ENCODE measurements at regions of chrX and their contacts with region 1.

Region 1: GRCh38 chrX:110853610-110854009 is 58.0 kb upstream of the CHRDL1 start:
- DNase-seq: peak; percentile 42
- H3K4me3 ChIP-seq: no peak overlapping the region
- H3K27ac ChIP-seq: no peak overlapping the region
- H3K4me1 ChIP-seq: no peaks in the 10 kb centered on the region
- H3K27me3 ChIP-seq: no peaks in the 10 kb centered on the region
- CTCF ChIP-seq: peak; percentile 42 to 66

Region 2: GRCh38 chrX:110167952-110168451 is 685.6 kb before region 1 on chrX:
- CTCF ChIA-PET with region 1: no interaction called
- dilution Hi-C with region 1: no loop called
- in situ Hi-C with region 1: loop called in 1 of 2 experiments (anchors 25 kb)
- intact Hi-C with region 1: no loop called
- DNase-seq: peak; percentile 27
- H3K4me3 ChIP-seq: no peak overlapping the region
- H3K27ac ChIP-seq: no peak overlapping the region
- H3K4me1 ChIP-seq: peaks cover 12% of the 10 kb centered on the region
- H3K27me3 ChIP-seq: no peaks in the 10 kb centered on the region
- CTCF ChIP-seq: peak; percentile 40 to 60

Region 3: DNA sequence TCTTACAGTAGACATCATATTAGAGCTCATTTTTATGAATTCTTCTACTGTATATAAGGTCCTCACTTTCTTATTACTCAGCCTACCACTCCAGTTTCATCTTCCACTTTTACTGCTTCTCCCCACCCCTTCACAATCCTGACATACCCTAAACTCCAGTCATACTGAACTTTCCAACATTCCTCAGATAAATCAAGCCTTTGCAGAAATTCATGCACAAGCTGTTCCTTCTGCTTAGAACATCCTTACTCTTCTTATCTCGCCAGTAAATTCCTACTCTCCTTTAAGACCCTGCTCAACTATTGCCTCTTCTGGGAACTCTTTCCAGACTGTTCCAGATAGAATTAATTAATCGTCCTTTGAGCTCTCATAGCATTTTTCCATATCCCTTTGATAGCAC is 470.2 kb before region 1 on chrX:
- CTCF ChIA-PET with region 1: no interaction called
- dilution Hi-C with region 1: no loop called
- in situ Hi-C with region 1: no loop called
- intact Hi-C with region 1: no loop called
- DNase-seq: peak; percentile 41
- H3K4me3 ChIP-seq: no peak overlapping the region
- H3K27ac ChIP-seq: peak overlapping the region; percentile 34
- H3K4me1 ChIP-seq: peaks cover 15% of the 10 kb centered on the region
- H3K27me3 ChIP-seq: no peaks in the 10 kb centered on the region
- CTCF ChIP-seq: no peak

Region 4: DNA sequence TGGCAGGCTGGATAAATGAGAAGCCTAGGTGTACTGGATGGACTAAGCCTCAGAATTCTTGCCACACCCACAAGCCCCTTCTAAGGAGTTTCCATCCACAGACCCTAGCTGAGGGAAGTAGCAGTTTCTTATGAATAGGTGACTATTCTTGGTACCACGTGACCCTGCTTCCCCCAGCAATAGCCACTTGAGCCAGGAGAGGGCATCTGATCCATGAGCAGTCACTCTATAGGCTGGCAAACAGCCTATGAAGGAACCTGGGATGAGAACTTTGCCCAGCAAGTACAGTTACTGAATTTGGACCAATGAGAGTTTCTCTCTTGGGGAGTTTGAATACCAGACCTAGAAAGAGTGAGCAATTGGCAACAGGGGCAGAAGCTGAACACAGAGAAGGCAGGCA is 411.0 kb before region 1 on chrX:
- CTCF ChIA-PET with region 1: no interaction called
- dilution Hi-C with region 1: loop called (anchors 5 kb)
- in situ Hi-C with region 1: loop called (anchors 5 to 10 kb)
- intact Hi-C with region 1: no loop called
- DNase-seq: peak; percentile 35
- H3K4me3 ChIP-seq: no peak overlapping the region
- H3K27ac ChIP-seq: no peak overlapping the region
- H3K4me1 ChIP-seq: peaks cover 9% of the 10 kb centered on the region
- H3K27me3 ChIP-seq: peaks cover 2% of the 10 kb centered on the region
- CTCF ChIP-seq: peak; percentile 31 to 33

Region 5: GRCh38 chrX:110450050-110450449 is 403.6 kb before region 1 on chrX:
- CTCF ChIA-PET with region 1: no interaction called
- dilution Hi-C with region 1: loop called (anchors 5 kb)
- in situ Hi-C with region 1: loop called in 1 of 2 experiments (anchors 10 kb)
- intact Hi-C with region 1: loop called (anchors 1 kb)
- DNase-seq: peak; percentile 60
- H3K4me3 ChIP-seq: no peak overlapping the region
- H3K27ac ChIP-seq: no peak overlapping the region
- H3K4me1 ChIP-seq: peaks cover 1% of the 10 kb centered on the region
- H3K27me3 ChIP-seq: peaks cover 2% of the 10 kb centered on the region
- CTCF ChIP-seq: peak; percentile 78 to 82

Region 6: GRCh38 chrX:110964786-110965185 is 111.2 kb after region 1 on chrX:
- CTCF ChIA-PET with region 1: no interaction called
- dilution Hi-C with region 1: no loop called
- in situ Hi-C with region 1: no loop called
- intact Hi-C with region 1: loop called (anchors 10 kb)
- DNase-seq: no peak
- H3K4me3 ChIP-seq: no peak overlapping the region
- H3K27ac ChIP-seq: no peak overlapping the region
- H3K4me1 ChIP-seq: peaks cover 18% of the 10 kb centered on the region
- H3K27me3 ChIP-seq: peaks cover 2% of the 10 kb centered on the region
- CTCF ChIP-seq: no peak

Region 7: GRCh38 chrX:110992611-110993010 is 139.0 kb after region 1 on chrX:
- CTCF ChIA-PET with region 1: no interaction called
- dilution Hi-C with region 1: no loop called
- in situ Hi-C with region 1: no loop called
- intact Hi-C with region 1: loop called (anchors 5 kb)
- DNase-seq: peak; percentile 20
- H3K4me3 ChIP-seq: no peak overlapping the region
- H3K27ac ChIP-seq: no peak overlapping the region
- H3K4me1 ChIP-seq: no peaks in the 10 kb centered on the region
- H3K27me3 ChIP-seq: no peaks in the 10 kb centered on the region
- CTCF ChIP-seq: peak; percentile 59 to 72

Region 8: GRCh38 chrX:111244235-111244750 is 390.7 kb after region 1 on chrX:
- CTCF ChIA-PET with region 1: interaction called, 3 read pairs
- dilution Hi-C with region 1: no loop called
- in situ Hi-C with region 1: loop called in 1 of 2 experiments (anchors 10 kb)
- intact Hi-C with region 1: loop called (anchors 1 kb)
- DNase-seq: peak; percentile 5
- H3K4me3 ChIP-seq: no peak overlapping the region
- H3K27ac ChIP-seq: no peak overlapping the region
- H3K4me1 ChIP-seq: no peaks in the 10 kb centered on the region
- H3K27me3 ChIP-seq: no peaks in the 10 kb centered on the region
- CTCF ChIP-seq: peak; percentile 62 to 63

Measured in mammary epithelial cell (primary cell).